Head of caudate nucleus (tissue), 42 donors: ENCODE measurements at regions of chr3 and their contacts with region 1.

Region 1: DNA sequence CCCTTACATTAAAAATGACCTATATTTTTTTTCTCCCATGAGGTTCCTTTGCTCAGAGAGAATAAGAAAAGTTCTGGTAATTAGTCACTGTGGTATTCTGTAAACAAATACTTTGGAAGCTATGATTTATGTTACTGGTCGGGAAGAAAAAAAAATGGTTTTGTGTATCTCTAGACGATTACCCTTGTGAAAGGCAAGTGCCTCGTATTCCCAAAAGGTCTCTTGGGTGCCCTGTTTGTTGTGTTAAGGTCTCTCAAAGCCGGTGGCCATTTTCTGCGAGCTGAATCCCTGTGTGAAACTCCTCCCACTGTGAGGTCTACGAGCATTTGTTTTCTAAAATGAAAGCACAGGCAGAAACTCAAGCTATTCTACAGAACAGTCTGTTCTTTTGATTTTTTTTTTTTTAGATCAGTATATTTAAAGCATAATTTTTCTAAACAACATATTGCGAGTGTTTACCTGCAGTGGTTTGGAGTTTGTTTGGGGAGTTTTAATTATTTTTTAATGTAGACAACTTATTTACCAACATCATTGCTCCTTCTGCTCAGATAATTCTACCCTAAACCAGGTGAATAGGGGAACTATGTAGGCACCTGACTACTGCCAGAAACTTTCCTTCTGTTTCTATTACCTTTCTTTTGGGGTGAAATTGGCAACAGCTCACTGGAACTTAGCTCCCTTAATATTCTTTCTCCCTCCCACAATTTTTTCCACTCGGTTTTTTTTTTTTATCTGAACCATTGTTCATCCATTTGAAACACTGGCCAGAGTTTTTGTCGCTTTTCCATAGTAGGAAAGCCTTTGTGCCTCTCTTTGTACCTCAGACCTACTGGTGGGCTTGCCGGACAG is 44.0 kb downstream of the ZBTB38 start:
- DNase-seq: peak in 38 of 42 donors; percentile 28 to 82 (median 56)

Region 2: DNA sequence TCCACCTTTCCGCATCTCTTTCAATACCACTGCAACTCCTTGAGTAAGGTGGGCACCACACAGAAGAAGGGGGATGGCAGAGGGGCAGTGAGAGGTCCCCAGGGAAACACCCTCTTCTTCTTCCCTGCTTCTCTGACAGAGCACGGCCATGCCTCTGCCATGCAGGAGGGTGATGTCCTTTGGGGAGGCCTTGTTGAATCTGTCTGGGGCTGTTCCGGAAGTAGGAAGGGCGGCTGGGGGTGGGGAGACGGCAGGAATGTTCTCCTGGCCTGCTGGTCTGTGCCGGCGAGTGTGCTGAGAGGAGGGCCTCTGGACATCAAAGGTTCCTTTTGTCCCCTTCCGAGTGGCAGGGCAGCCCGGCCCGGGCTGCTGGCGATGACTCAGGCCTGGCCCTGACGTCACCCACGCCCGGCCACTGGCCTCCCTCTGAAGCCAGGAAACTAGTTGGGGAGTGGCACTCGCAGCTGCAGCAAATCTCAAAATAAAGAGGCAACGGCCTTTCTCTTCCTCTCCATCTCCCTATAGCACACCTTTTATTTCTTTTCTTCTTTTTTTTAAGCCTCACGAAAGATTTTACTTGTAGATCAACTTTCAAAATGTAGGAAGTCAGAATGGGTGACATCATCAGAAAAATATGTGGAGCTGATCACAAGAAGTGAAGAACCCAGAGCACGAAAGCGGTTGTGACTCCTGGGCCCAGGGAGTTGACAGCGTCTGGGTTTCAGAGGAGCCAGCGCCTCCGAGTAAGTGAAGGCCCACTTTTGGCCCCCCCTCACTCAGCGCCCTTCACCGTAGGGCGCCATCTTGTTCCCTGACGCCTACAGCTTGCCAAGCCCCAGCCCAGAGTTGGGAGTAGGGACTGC is 44.0 kb before region 1 on chr3 and contains the start of gene ZBTB38:
- intact Hi-C with region 1: loop called (anchors 5 kb)
- DNase-seq: peak; percentile 79 to 97 (median 91)